A549 (cell line): ENCODE measurements at regions of chr6 and their contacts with region 1.

Region 1: GRCh38 chr6:104537180-104537579 is 322.5 kb downstream of the HACE1 start:
- DNase-seq: no peak
- ATAC-seq: no peak
- H3K4me3 ChIP-seq: no peak overlapping the region
- H3K27ac ChIP-seq: no peak overlapping the region
- H3K4me1 ChIP-seq: no peaks in the 10 kb centered on the region
- CTCF ChIP-seq: no peak
- EP300 ChIP-seq: no peak
- POLR2A ChIP-seq: no peak
- RAD21 ChIP-seq: no peak

Region 2: DNA sequence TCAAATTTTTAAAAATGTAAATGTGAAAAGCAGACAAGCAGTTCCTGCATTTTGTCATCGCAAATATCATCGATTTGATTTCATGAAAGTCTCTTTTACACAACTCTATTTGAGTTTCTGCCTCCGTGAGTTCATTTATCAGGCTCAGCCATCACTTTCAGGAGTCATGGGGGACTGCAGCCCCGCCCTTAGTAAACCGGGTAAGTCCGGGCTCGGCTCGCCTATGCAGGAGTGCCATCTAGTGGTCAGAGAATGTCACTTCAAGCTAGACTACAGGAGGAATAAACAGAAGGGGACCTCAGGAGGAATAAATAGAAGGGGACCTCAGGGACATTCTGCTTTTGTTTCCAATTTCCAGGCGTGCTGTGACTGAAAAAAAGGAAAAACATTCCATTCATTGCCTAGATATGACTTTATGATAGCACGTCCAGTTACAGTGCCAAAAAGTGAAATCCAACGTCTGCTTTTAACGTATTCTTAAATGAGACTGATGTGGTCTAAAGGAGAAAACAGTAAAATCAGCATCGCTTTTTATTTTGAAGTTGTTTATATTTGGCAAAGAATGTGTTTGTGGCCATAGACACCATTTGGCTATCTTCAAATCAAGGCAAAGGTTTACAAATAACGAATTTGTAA is 11.4 kb before region 1 on chr6:
- CTCF ChIA-PET with region 1: interaction called, 34 read pairs
- POLR2A ChIA-PET with region 1: no interaction called
- DNase-seq: peak; percentile 53 to 69
- ATAC-seq: peak; percentile 92 to 95
- H3K4me3 ChIP-seq: peak overlapping the region; percentile 29; the same call in 2 of the 3 replicates
- H3K27ac ChIP-seq: no peak overlapping the region
- H3K4me1 ChIP-seq: no peaks in the 10 kb centered on the region
- CTCF ChIP-seq: peak; percentile 80
- EP300 ChIP-seq: no peak
- POLR2A ChIP-seq: no peak
- RAD21 ChIP-seq: peak; percentile 83 to 86